B cell (primary cell): ENCODE measurements at regions of chr2 and their contacts with region 1.

Region 1: DNA sequence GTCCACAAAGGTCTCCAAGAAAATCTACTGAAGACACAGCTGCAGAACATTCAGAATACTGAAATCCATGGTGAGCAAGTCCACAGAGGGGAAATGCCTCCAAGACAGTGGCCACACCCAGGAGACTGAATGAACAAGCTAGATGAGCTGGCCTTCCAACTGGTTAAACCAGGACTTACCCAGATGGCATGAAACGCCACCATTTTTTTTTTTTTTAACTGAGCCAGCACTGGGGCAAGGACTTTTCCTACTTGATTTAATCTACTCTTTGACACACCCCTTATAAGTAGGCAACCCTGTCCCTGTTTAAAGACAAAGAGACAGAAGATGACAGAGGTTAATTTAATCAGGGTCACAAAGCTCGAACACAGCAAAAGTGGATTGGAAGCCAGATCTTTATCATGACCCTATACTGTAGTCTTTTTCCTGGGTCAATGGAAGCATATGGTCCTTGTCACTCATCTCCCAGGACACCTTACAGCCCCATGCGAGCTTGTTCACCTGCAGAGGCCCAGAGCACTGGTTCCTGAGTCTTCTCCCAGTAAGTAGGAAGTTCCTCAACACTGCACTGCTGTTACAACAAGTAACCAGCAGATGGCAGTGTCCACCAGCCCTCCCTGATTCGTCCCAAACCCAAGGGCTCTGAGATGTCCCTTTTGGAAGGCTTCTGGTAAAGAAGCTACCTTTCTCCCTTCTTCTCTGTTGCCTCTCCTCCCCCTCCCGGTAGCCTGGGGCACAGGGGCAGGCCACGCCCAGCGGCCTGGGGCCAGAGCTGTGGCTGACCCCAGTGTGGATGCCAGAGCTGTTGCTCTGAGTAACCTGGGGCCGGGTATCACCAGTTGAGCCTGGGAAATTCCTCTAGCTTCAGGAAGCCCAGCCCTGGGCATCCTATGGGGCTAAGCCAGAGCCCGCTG is 5.6 kb upstream of the GDF7 start:
- DNase-seq: peak; percentile 86
- ATAC-seq: peak; percentile 73
- H3K4me3 ChIP-seq: no peak overlapping the region
- H3K4me3 Mint-ChIP-seq: no peak overlapping the region
- H3K27ac ChIP-seq: no peak overlapping the region
- H3K27ac Mint-ChIP-seq: no peak overlapping the region
- H3K4me1 ChIP-seq: peaks cover 11 to 28% of the 10 kb centered on the region in 2 donors
- H3K4me1 Mint-ChIP-seq: peaks cover 22% of the 10 kb centered on the region
- H3K27me3 ChIP-seq: peaks cover 0 to 55% (median 7%) of the 10 kb centered on the region in 4 experiments
- H3K27me3 Mint-ChIP-seq: peaks cover 26% of the 10 kb centered on the region
- CTCF ChIP-seq: peak; percentile 98

Region 2: GRCh38 chr2:20675701-20676352 is 14.5 kb after region 1 on chr2:
- CTCF ChIA-PET with region 1: interaction called, 160 read pairs
- POLR2A ChIA-PET with region 1: interaction called, 74 read pairs
- intact Hi-C with region 1: loop called (anchors 1 kb)
- DNase-seq: peak; percentile 83
- ATAC-seq: peak; percentile 79
- H3K4me3 ChIP-seq: peak overlapping the region in 1 of 5 experiments; percentile 15
- H3K4me3 Mint-ChIP-seq: peak overlapping the region; percentile 80
- H3K27ac ChIP-seq: peak overlapping the region; percentile 63 to 82
- H3K27ac Mint-ChIP-seq: peak overlapping the region; percentile 98
- H3K4me1 ChIP-seq: peaks cover 35 to 86% of the 10 kb centered on the region in 2 donors
- H3K4me1 Mint-ChIP-seq: peaks cover 59% of the 10 kb centered on the region
- H3K27me3 ChIP-seq: peaks cover 0 to 16% (median 4%) of the 10 kb centered on the region in 4 experiments
- H3K27me3 Mint-ChIP-seq: no peaks in the 10 kb centered on the region
- CTCF ChIP-seq: no peak

Region 3: GRCh38 chr2:20698916-20699613 is 37.7 kb after region 1 on chr2:
- CTCF ChIA-PET with region 1: interaction called, 11 read pairs
- POLR2A ChIA-PET with region 1: no interaction called
- intact Hi-C with region 1: no loop called
- DNase-seq: peak; percentile 30
- ATAC-seq: no peak
- H3K4me3 ChIP-seq: peak overlapping the region in 1 of 5 experiments; percentile 12
- H3K4me3 Mint-ChIP-seq: peak overlapping the region; percentile 66
- H3K27ac ChIP-seq: peak overlapping the region in 1 of 2 donors; percentile 1
- H3K27ac Mint-ChIP-seq: peak overlapping the region; percentile 27
- H3K4me1 ChIP-seq: peaks cover 13 to 31% of the 10 kb centered on the region in 2 donors
- H3K4me1 Mint-ChIP-seq: peaks cover 32% of the 10 kb centered on the region
- H3K27me3 ChIP-seq: no peaks in the 10 kb centered on the region
- H3K27me3 Mint-ChIP-seq: no peaks in the 10 kb centered on the region
- CTCF ChIP-seq: no peak

Region 4: GRCh38 chr2:20822535-20823490 is 161.5 kb after region 1 on chr2 and contains the start of gene LDAH:
- CTCF ChIA-PET with region 1: interaction called, 13 read pairs
- POLR2A ChIA-PET with region 1: interaction called, 9 read pairs
- intact Hi-C with region 1: no loop called
- DNase-seq: peak; percentile 92
- ATAC-seq: peak; percentile 79
- H3K4me3 ChIP-seq: peak within 1 kb of the TSS; percentile 64 to 99 (median 88)
- H3K4me3 Mint-ChIP-seq: peak within 1 kb of the TSS; percentile 98
- H3K27ac ChIP-seq: peak within 1 kb of the TSS; percentile 89 to 96
- H3K27ac Mint-ChIP-seq: peak within 1 kb of the TSS; percentile 99
- H3K4me1 ChIP-seq: peaks cover 0 to 7% of the 10 kb centered on the region in 2 donors
- H3K4me1 Mint-ChIP-seq: peaks cover 26% of the 10 kb centered on the region
- H3K27me3 ChIP-seq: peaks cover 0 to 2% (median 0%) of the 10 kb centered on the region in 4 experiments
- H3K27me3 Mint-ChIP-seq: peaks cover 1% of the 10 kb centered on the region
- CTCF ChIP-seq: no peak
- total RNA-seq, gene LDAH: 27.1 and 31.3 TPM in 2 replicates

Region 5: GRCh38 chr2:20970068-20970467 is 308.7 kb after region 1 on chr2:
- CTCF ChIA-PET with region 1: interaction called, 331 read pairs
- POLR2A ChIA-PET with region 1: no interaction called
- intact Hi-C with region 1: no loop called
- DNase-seq: no peak
- ATAC-seq: no peak
- H3K4me3 ChIP-seq: no peak overlapping the region
- H3K4me3 Mint-ChIP-seq: no peak overlapping the region
- H3K27ac ChIP-seq: no peak overlapping the region
- H3K27ac Mint-ChIP-seq: no peak overlapping the region
- H3K4me1 ChIP-seq: no peaks in the 10 kb centered on the region
- H3K4me1 Mint-ChIP-seq: no peaks in the 10 kb centered on the region
- H3K27me3 ChIP-seq: peaks cover 0 to 7% (median 0%) of the 10 kb centered on the region in 4 experiments
- H3K27me3 Mint-ChIP-seq: peaks cover 34% of the 10 kb centered on the region
- CTCF ChIP-seq: no peak